Psoas muscle (tissue), 8 donors: ENCODE measurements at regions of chr16 and their contacts with region 1.

Region 1: GRCh38 chr16:1958726-1959268 is 541 bp upstream of the NDUFB10 start:
- DNase-seq: no peak
- ATAC-seq: peak in 3 of 4 donors; percentile 2
- H3K4me3 ChIP-seq: peak overlapping the region; percentile 92
- H3K27ac ChIP-seq: peak overlapping the region; percentile 87
- H3K4me1 ChIP-seq: peaks cover 25% of the 10 kb centered on the region
- H3K27me3 ChIP-seq: no peaks in the 10 kb centered on the region
- CTCF ChIP-seq: no peak

Region 2: DNA sequence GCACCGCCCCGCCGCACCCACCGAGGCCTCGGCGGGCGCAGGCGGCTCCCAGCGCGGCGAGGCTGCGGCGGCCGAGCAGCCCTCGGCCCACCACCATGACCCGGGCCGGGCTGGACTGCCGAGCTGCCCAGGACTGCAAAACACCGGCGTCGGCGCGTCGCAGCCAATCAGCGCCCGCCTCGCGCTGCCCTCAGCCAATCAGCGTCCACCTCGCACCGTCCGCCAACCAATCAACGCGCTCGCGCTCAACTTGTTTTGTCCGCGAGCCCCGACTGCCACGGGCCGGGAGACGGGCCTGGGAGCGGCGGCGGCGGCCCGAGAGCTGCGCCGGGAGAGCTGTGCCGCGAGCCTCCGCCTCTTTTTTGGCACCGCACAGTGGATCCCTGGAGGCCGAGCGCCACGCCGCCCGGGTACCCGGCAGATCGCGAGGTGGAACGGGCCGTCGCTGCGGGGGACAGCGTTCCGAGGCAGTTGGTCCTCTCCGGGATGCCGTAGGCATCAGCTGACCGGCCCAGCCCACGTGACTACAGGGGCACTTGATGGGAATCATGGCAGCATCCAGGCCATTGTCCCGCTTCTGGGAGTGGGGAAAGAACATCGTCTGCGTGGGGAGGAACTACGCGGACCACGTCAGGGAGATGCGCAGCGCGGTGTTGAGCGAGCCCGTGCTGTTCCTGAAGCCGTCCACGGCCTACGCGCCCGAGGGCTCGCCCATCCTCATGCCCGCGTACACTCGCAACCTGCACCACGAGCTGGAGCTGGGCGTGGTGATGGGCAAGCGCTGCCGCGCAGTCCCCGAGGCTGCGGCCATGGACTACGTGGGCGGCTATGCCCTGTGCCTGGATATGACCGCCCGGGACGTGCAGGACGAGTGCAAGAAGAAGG is 131.9 kb before region 1 on chr16 and contains the starts of genes FAHD1 and HAGH:
- intact Hi-C with region 1: no loop called
- DNase-seq: peak; percentile 94 to 97
- ATAC-seq: peak; percentile 95 to 97 (median 96)
- H3K4me3 ChIP-seq: peak within 1 kb of the TSS; percentile 79
- H3K27ac ChIP-seq: peak within 1 kb of the TSS; percentile 90
- H3K4me1 ChIP-seq: peaks cover 47% of the 10 kb centered on the region
- H3K27me3 ChIP-seq: no peaks in the 10 kb centered on the region
- CTCF ChIP-seq: no peak
- total RNA-seq, gene FAHD1: 23.2 to 28.1 (median 24.1) TPM
- total RNA-seq, gene HAGH: 123 to 167 (median 157) TPM

Region 3: GRCh38 chr16:1971796-1972489 is 13.1 kb after region 1 on chr16 and contains the start of gene TBL3:
- intact Hi-C with region 1: loop called in 1 of 2 experiments (anchors 1 kb)
- DNase-seq: peak; percentile 94 to 97
- ATAC-seq: peak; percentile 94 to 97 (median 94)
- H3K4me3 ChIP-seq: peak within 1 kb of the TSS; percentile 100
- H3K27ac ChIP-seq: peak within 1 kb of the TSS; percentile 98
- H3K4me1 ChIP-seq: peaks cover 20% of the 10 kb centered on the region
- H3K27me3 ChIP-seq: no peaks in the 10 kb centered on the region
- CTCF ChIP-seq: no peak
- total RNA-seq, gene TBL3: 31.5 to 41.8 (median 40.7) TPM